GM13976 (cell line): ENCODE measurements at regions of chr3 and their contacts with region 1.

Region 1: DNA sequence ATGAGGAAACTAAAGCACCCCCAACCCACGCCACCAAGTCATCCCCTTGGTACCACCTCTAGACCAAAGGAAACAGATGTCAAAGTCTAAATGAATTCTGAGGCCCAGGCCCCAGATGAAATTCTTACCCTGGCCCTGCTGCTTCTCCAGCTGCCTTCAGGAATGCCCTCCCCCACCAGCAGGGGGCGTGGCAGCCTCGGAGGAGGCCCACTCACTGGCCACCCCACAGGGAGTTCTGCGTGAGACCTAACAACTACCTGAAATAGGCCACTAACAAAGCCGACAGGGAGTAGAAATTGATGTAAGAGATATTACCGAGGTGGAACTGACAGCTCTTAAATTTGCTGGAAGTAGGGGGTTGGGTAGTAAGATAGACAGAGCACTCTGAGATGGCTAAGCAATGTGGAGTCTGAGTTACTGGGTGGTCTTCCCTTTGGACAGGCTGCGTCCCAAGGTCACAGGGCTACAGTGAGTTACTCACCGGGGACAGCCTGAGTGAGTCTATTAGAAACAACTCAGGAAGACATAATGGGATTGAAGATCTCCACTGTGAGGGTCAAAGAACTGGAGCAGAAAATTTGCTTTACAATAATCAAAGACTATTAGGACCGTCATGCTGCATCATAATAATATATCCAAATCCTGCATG is 240.7 kb downstream of the SHOX2 start:
- DNase-seq: peak; percentile 57
- CTCF ChIP-seq: peak; percentile 82

Region 2: GRCh38 chr3:157713101-157713500 is 152.4 kb before region 1 on chr3:
- in situ Hi-C with region 1: no loop called
- DNase-seq: no peak
- CTCF ChIP-seq: no peak

Region 3: DNA sequence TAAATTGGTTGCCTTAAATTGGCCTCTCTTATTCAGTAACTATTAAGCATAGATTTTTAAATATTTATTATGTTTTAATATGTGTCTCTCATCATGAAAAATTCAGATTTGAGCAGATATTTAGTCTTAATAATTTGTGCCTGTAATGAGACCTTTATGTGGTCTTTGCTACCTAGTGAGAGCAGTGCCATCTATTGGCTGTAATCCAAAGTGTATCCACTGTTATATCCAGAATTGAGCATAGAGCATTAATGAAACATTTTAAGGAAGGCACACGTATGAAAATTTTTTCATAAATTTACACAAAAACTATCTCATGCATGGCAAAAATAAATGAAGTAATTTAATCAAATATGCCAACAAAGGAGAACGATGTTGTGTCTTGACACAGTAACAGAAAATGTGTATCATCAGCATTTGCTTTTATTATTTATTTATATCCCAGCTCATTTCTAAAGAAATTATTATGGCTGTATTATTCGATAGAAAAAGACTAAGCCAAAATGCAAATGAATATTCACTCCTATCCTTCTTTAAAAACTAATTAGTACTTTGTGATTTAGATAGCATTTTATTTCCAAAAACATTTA is 448.0 kb after region 1 on chr3:
- in situ Hi-C with region 1: loop called (anchors 25 kb)
- DNase-seq: no peak
- CTCF ChIP-seq: peak; percentile 41

Region 4: DNA sequence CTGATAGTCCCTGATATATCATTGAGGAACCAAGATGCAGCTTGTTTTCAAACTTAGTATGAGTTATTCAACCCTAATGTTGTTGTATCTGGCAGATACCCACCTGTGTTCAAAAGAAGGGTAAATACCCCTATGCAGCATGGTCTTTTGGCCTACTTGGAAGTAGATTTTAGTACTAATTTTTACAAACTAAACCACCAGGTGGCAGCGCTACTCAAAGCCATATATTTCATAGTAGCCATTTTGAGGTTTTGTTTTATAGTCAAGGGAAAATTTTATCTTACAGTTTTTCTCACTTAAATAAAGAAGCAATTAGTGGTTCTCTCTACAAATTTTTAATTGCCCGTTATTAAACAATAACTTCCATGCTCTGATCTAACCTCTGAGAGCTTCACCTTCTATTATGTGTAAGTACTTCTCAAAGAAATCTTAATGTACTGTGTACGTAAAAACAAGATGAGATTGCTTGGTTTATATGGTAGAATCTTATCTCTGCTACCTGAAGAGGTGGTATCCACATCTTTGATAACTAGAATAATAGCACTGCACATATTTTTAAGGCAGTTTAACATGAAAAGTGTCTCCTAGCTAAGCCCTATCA is 674.0 kb after region 1 on chr3:
- in situ Hi-C with region 1: loop called (anchors 25 kb)
- DNase-seq: no peak
- CTCF ChIP-seq: peak; percentile 35